CD4-positive, alpha-beta memory T cell (primary cell): ENCODE measurements at regions of chr3 and their contacts with region 1.

Region 1: GRCh38 chr3:172106989-172107388 is 67.6 kb downstream of the FNDC3B start:
- DNase-seq: peak; percentile 83 to 84 (median 84)
- H3K4me3 ChIP-seq: peak overlapping the region; percentile 1 to 56
- H3K4me3 Mint-ChIP-seq: peak overlapping the region; percentile 76 to 91 (median 81)
- H3K27ac ChIP-seq: peak overlapping the region; percentile 42
- H3K27ac Mint-ChIP-seq: peak overlapping the region; percentile 88 to 97 (median 94)
- H3K4me1 ChIP-seq: peaks cover 82% of the 10 kb centered on the region
- H3K4me1 Mint-ChIP-seq: peaks cover 67 to 85% (median 78%) of the 10 kb centered on the region in 4 donors
- H3K27me3 ChIP-seq: no peaks in the 10 kb centered on the region
- H3K27me3 Mint-ChIP-seq: no peaks in the 10 kb centered on the region

Region 2: GRCh38 chr3:171904829-171905228 is 202.2 kb before region 1 on chr3:
- CTCF ChIA-PET with region 1: no interaction called
- POLR2A ChIA-PET with region 1: no interaction called
- intact Hi-C with region 1: no loop called
- DNase-seq: no peak
- H3K4me3 ChIP-seq: no peak overlapping the region
- H3K4me3 Mint-ChIP-seq: no peak overlapping the region
- H3K27ac ChIP-seq: no peak overlapping the region
- H3K27ac Mint-ChIP-seq: no peak overlapping the region
- H3K4me1 ChIP-seq: no peaks in the 10 kb centered on the region
- H3K4me1 Mint-ChIP-seq: no peaks in the 10 kb centered on the region
- H3K27me3 ChIP-seq: no peaks in the 10 kb centered on the region
- H3K27me3 Mint-ChIP-seq: peaks cover 1 to 5% of the 10 kb centered on the region in 2 donors

Region 3: DNA sequence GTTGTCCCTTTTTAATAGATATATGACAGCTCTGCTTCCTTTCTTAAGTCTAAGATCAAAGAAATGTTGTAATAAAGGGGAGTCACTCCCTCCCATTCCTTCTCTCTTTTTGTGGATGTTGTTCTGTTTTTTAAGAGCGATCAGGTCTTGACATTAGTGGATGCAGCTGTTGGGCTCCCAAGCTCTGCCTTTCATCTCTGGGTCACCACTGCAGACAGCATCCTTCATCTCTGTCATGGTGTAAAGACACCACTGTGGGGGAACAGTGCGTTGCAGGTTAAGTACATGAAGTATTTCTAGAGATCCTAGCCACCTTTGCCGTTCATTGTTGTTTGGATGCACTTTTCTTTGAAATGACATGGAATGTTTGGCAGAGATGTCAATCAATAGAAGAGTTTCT is 49.9 kb before region 1 on chr3:
- CTCF ChIA-PET with region 1: no interaction called
- POLR2A ChIA-PET with region 1: no interaction called
- intact Hi-C with region 1: loop called (anchors 5 kb)
- DNase-seq: no peak
- H3K4me3 ChIP-seq: no peak overlapping the region
- H3K4me3 Mint-ChIP-seq: peak overlapping the region in 1 of 8 donors; percentile 62
- H3K27ac ChIP-seq: no peak overlapping the region
- H3K27ac Mint-ChIP-seq: peak overlapping the region in 1 of 7 donors; percentile 54
- H3K4me1 ChIP-seq: peaks cover 31% of the 10 kb centered on the region
- H3K4me1 Mint-ChIP-seq: peaks cover 26 to 50% (median 33%) of the 10 kb centered on the region in 4 donors
- H3K27me3 ChIP-seq: no peaks in the 10 kb centered on the region
- H3K27me3 Mint-ChIP-seq: no peaks in the 10 kb centered on the region

Region 4: GRCh38 chr3:172096881-172097420 is 10.0 kb before region 1 on chr3:
- CTCF ChIA-PET with region 1: interaction called, 4 read pairs
- POLR2A ChIA-PET with region 1: interaction called, 10 read pairs
- intact Hi-C with region 1: loop called (anchors 1 kb)
- DNase-seq: no peak
- H3K4me3 ChIP-seq: no peak overlapping the region
- H3K4me3 Mint-ChIP-seq: peak overlapping the region in 1 of 8 donors; percentile 31
- H3K27ac ChIP-seq: no peak overlapping the region
- H3K27ac Mint-ChIP-seq: no peak overlapping the region
- H3K4me1 ChIP-seq: peaks cover 38% of the 10 kb centered on the region
- H3K4me1 Mint-ChIP-seq: peaks cover 28 to 59% (median 47%) of the 10 kb centered on the region in 4 donors
- H3K27me3 ChIP-seq: no peaks in the 10 kb centered on the region
- H3K27me3 Mint-ChIP-seq: no peaks in the 10 kb centered on the region

Region 5: DNA sequence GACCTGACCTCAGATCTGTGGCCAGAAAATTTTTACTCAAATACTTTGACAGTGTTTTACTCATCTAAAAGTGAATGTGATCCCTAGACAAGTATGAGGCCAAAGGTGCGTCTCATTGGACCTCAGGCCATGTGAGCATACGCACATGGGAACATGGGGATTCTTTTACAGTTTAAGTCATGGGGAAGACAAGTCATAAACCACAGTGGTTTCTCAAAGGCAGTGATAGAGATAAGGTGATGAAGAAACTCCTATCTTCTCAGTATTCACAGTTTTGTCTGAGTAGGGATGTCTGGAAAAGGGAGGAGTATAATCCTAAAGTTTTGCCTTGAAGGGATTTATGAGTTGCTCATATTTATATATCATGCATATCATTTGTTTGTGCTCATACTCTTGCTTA is 106.2 kb after region 1 on chr3:
- CTCF ChIA-PET with region 1: no interaction called
- POLR2A ChIA-PET with region 1: no interaction called
- intact Hi-C with region 1: no loop called
- DNase-seq: no peak
- H3K4me3 ChIP-seq: no peak overlapping the region
- H3K4me3 Mint-ChIP-seq: no peak overlapping the region
- H3K27ac ChIP-seq: no peak overlapping the region
- H3K27ac Mint-ChIP-seq: peak overlapping the region in 1 of 7 donors; percentile 80
- H3K4me1 ChIP-seq: no peaks in the 10 kb centered on the region
- H3K4me1 Mint-ChIP-seq: peaks cover 2 to 19% (median 11%) of the 10 kb centered on the region in 4 donors
- H3K27me3 ChIP-seq: no peaks in the 10 kb centered on the region
- H3K27me3 Mint-ChIP-seq: no peaks in the 10 kb centered on the region

Region 6: DNA sequence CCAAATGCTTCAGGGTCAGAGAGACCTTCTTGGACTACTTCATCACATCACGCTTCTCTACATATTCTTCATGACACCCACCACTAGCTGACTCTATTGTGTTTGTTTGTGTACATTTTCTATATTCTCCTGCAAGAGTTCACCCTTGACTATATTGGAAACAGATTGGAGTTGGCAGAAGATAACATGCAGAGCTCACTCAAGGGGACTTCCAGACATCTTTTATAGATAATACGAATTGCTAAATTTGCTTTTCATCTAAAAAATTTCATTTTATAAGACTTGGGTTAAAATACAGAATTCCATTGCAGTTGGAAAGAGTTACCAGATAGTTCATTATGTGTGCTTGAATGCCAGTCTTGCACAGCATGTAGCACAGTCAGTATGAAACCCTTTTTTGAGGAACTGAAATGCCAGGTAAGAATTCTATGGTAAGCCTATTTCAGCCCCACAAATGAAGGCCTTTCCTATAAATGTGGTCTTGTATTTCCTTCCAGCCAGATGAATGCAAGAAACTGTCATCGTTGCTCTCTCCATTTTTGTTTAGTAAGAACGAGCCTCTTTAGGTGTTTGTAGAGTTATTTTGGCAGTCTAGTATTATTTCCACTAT is 163.7 kb after region 1 on chr3:
- CTCF ChIA-PET with region 1: interaction called, 3 read pairs
- POLR2A ChIA-PET with region 1: no interaction called
- intact Hi-C with region 1: loop called (anchors 10 kb)
- DNase-seq: no peak
- H3K4me3 ChIP-seq: no peak overlapping the region
- H3K4me3 Mint-ChIP-seq: no peak overlapping the region
- H3K27ac ChIP-seq: no peak overlapping the region
- H3K27ac Mint-ChIP-seq: no peak overlapping the region
- H3K4me1 ChIP-seq: no peaks in the 10 kb centered on the region
- H3K4me1 Mint-ChIP-seq: peaks cover 0 to 5% (median 0%) of the 10 kb centered on the region in 4 donors
- H3K27me3 ChIP-seq: no peaks in the 10 kb centered on the region
- H3K27me3 Mint-ChIP-seq: no peaks in the 10 kb centered on the region

Region 7: GRCh38 chr3:172522871-172523818 is 416.2 kb after region 1 on chr3 and contains the start of gene TNFSF10:
- CTCF ChIA-PET with region 1: no interaction called
- POLR2A ChIA-PET with region 1: interaction called, 11 read pairs
- intact Hi-C with region 1: no loop called
- DNase-seq: peak; percentile 68 to 82 (median 73)
- H3K4me3 ChIP-seq: peak within 1 kb of the TSS; percentile 96 to 98
- H3K4me3 Mint-ChIP-seq: peak within 1 kb of the TSS; percentile 94 to 100 (median 96)
- H3K27ac ChIP-seq: peak within 1 kb of the TSS; percentile 79
- H3K27ac Mint-ChIP-seq: peak within 1 kb of the TSS; percentile 91 to 97 (median 96)
- H3K4me1 ChIP-seq: peaks cover 41% of the 10 kb centered on the region
- H3K4me1 Mint-ChIP-seq: peaks cover 34 to 67% (median 43%) of the 10 kb centered on the region in 4 donors
- H3K27me3 ChIP-seq: no peaks in the 10 kb centered on the region
- H3K27me3 Mint-ChIP-seq: no peaks in the 10 kb centered on the region
- total RNA-seq, gene TNFSF10: 63.4 to 65.6 TPM